WTC11 (cell line): ENCODE measurements at regions of chr5 and their contacts with region 1.

Region 1: DNA sequence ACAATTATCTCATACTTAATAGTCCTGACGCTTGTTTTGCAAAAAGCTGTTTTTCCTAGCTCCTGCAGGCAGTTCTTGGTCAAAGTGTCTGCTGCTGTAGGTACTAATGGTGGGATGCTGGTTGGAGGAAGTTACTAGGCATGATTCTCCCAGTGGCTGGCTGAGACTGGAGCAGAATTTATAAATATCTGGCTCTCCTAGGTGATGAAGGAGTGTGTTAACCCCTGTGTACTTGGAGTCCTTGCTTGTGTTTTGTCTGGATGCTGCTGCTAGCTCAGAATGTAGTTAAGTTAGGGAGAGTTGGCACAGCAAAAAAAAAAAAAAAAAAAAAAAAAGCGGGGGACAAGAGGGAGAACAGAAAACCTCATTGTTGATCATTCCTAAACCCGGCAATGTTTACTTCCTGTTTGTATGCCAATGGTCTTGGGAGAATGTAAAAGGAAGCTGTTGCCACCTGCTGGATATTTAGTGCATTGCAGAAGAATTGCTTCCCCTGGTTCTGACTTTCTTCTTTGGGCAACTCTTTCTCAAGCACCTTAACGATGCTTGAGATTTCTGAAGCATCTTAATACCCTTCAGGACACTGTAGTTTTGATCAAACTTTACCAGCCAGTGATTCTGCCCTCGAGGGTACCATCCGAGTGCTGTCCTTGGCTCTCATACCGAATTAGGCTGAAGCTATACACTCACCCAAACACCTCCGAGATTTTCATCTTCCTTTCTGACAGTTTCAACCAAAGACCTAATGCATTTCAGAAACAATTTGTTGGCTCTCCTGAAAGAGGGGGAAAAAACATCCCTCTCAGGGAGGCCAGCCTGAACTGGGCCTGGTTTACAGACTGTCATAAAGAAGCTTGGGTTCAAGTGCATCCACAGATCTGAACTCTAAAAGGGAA is 71.7 kb upstream of the WWC1 start:
- DNase-seq: peak; percentile 59
- ATAC-seq: peak; percentile 72
- H3K4me3 Mint-ChIP-seq: no peak overlapping the region
- H3K27ac Mint-ChIP-seq: no peak overlapping the region; the same call in 1 of the 2 replicates
- H3K4me1 Mint-ChIP-seq: peaks cover 39% of the 10 kb centered on the region
- H3K27me3 Mint-ChIP-seq: no peaks in the 10 kb centered on the region
- CTCF ChIP-seq: peak; percentile 79

Region 2: DNA sequence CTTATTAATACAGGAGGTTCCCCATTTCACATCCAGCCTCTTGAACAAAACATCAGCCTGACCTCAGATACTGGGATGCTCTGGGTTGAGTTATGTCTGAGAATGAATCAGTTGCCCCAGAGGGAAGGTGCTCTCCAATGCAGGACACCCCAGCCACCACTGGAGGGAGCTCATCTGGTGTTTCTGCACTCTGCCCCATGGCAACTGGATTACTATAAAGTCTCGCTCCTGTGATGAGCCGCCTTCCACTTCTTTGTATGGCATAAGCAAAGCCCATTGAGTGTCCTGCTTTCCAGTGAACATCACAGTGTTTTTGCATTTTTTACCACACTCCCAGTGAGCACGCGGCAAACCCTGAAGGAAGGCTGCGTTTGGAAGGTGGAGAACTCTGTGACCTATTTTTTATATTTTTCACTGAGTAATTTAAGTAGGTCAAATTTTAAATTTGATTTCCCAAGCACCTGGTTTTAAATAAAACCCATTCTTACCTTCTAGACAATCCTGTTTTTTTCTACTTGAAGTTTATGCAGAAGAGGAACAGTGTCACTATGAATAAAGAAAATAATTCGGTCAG is 105.2 kb before region 1 on chr5:
- CTCF ChIA-PET with region 1: interaction called, 26 read pairs
- POLR2A ChIA-PET with region 1: no interaction called
- DNase-seq: peak; percentile 86
- ATAC-seq: peak; percentile 78
- H3K4me3 Mint-ChIP-seq: no peak overlapping the region
- H3K27ac Mint-ChIP-seq: no peak overlapping the region
- H3K4me1 Mint-ChIP-seq: peaks cover 38% of the 10 kb centered on the region
- H3K27me3 Mint-ChIP-seq: no peaks in the 10 kb centered on the region
- CTCF ChIP-seq: peak; percentile 75

Region 3: DNA sequence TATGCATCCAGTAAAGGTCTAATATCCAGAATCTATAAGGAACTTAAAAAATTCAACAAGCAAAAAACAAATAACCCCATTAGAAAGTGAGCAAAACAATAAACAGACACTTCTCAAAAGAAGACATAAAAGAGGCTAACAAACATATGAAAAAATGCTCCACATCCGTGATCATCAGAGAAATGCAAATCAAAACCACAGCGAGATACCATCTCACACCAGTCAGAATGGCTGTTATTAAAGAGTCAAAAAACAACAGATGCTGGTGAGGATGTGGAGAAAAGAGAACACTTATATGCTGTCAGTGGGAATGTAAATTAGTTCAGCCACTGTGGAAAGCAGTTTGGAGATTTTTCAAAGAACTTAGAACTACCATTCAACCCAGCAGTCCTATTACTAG is 157.8 kb after region 1 on chr5:
- CTCF ChIA-PET with region 1: no interaction called
- POLR2A ChIA-PET with region 1: no interaction called
- DNase-seq: no peak
- ATAC-seq: no peak
- H3K4me3 Mint-ChIP-seq: no peak overlapping the region
- H3K27ac Mint-ChIP-seq: no peak overlapping the region
- H3K4me1 Mint-ChIP-seq: no peaks in the 10 kb centered on the region
- H3K27me3 Mint-ChIP-seq: no peaks in the 10 kb centered on the region
- CTCF ChIP-seq: no peak

Region 4: DNA sequence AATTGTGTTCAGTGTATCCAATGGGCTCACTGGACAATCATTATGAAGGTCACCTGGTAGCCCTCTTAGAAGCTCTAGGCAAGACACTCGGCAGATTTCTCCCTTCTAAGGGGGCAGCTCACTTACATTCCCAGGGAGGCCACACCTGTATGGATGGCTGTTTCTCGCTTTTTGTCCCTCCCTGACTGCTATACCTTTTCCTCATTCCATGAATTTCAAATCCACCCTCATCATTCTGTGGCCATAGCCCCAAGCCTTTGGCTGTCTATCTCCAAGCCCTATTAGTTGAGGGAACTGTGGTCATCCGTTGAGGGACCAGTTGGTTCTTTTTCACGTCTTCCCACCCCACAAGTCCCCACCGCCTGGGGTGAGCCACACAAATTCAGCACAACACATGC is 181.5 kb after region 1 on chr5:
- CTCF ChIA-PET with region 1: no interaction called
- POLR2A ChIA-PET with region 1: no interaction called
- DNase-seq: no peak
- ATAC-seq: no peak
- H3K4me3 Mint-ChIP-seq: no peak overlapping the region
- H3K27ac Mint-ChIP-seq: no peak overlapping the region
- H3K4me1 Mint-ChIP-seq: peaks cover 10% of the 10 kb centered on the region
- H3K27me3 Mint-ChIP-seq: no peaks in the 10 kb centered on the region
- CTCF ChIP-seq: no peak

Region 5: DNA sequence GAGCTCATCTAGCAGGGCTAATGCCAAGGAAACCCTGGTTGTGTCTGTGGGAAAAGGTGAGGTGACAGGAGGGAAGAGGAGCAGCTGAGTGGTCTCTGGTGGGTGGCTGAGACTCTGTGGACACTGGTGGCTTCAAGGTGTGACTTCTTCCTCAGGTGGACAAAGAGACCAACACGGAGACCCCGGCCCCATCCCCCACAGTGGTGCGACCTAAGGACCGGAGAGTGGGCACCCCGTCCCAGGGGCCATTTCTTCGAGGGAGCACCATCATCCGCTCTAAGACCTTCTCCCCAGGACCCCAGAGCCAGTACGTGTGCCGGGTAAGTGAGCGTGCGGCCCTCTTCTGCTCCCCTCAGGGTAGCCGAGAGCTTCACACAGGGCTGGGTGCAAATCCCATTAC is 235.4 kb after region 1 on chr5:
- CTCF ChIA-PET with region 1: no interaction called
- POLR2A ChIA-PET with region 1: no interaction called
- DNase-seq: no peak
- ATAC-seq: no peak
- H3K4me3 Mint-ChIP-seq: no peak overlapping the region
- H3K27ac Mint-ChIP-seq: no peak overlapping the region
- H3K4me1 Mint-ChIP-seq: no peaks in the 10 kb centered on the region
- H3K27me3 Mint-ChIP-seq: no peaks in the 10 kb centered on the region
- CTCF ChIP-seq: no peak